Activated naive CD8-positive, alpha-beta T cell treated with anti-CD3 and anti-CD28 coated beads, Interleukin-2, amount 10 ng/mL, durations not matched to agents 7 days and 5 days (primary cell): ENCODE measurements at regions of chr15 and their contacts with region 1.

Region 1: DNA sequence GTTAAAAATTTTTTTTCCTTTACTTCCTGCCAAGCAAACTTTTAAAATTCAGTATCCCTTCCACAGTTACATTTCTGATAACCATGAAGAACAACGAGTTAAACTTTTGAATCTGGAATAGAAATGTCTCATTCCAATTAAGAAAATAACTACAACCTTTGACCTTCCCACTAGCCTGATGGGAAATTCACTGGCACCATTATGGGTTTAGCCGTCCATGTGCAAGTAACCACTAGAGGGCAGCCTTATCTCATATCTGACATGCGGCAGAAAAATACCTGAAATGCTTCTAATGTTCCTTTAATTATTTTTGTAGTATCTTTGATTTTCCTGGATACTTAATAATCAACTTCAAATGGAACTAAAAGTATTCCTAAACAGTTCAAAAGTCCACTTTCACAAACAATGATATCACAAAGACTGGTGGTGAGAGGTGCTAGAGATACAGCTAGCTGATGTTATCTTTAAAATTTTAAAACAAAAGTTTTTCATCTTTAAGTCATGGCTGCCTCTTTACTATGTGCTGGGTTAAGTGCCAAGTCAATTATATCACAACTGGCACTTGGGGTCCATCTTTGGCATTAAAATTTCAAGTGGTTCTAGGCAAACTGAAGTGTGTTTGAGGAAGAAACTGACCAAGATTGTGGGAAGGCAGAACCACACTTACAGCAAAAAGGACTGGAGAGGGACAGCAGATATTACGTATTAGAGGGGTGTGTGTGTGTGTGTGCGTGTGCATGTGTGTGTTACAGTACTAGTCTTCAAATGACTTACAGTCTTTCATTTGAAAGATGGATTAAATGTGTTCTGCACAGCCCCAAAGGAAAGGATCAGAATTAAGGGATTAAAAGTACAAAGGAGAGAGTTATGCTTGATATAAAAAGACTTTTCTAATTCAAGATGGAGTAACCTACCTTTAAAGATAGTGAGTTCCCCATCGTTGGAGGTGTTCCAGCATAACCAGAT is 107.1 kb upstream of the ICE2 start:
- DNase-seq: no peak
- ATAC-seq: no peak
- H3K4me3 Mint-ChIP-seq: peak overlapping the region; percentile 72
- H3K27ac Mint-ChIP-seq: peak overlapping the region; percentile 84
- H3K4me1 Mint-ChIP-seq: peaks cover 64% of the 10 kb centered on the region
- H3K27me3 Mint-ChIP-seq: no peaks in the 10 kb centered on the region

Region 2: DNA sequence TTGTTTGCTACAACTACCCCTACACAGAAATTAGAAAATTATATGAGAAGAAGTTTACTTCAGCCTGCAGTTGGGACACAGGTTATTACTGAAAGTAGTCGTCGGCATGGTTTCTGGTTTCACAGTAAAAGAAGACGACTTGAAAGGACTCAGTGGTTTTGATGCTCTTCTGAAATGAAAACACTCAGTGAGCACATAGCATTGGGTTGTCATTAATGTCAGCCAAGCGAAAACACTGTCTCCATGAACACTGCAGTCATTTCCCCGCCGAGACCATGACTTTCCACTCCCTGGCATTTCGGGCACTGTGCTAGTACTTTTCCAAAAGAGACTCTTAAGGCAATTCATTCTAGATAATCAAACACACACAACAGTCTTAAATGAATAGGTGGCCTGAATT is 37.9 kb before region 1 on chr15:
- POLR2A ChIA-PET with region 1: interaction called, 25 read pairs
- DNase-seq: no peak
- ATAC-seq: peak; percentile 76
- H3K4me3 Mint-ChIP-seq: peak overlapping the region; percentile 82
- H3K27ac Mint-ChIP-seq: peak overlapping the region; percentile 98
- H3K4me1 Mint-ChIP-seq: peaks cover 84% of the 10 kb centered on the region
- H3K27me3 Mint-ChIP-seq: no peaks in the 10 kb centered on the region

Region 3: GRCh38 chr15:60568301-60568742 is 17.7 kb before region 1 on chr15:
- POLR2A ChIA-PET with region 1: interaction called, 36 read pairs
- DNase-seq: no peak
- ATAC-seq: peak; percentile 17
- H3K4me3 Mint-ChIP-seq: peak overlapping the region; percentile 67
- H3K27ac Mint-ChIP-seq: peak overlapping the region; percentile 83
- H3K4me1 Mint-ChIP-seq: peaks cover 66% of the 10 kb centered on the region
- H3K27me3 Mint-ChIP-seq: no peaks in the 10 kb centered on the region

Region 4: DNA sequence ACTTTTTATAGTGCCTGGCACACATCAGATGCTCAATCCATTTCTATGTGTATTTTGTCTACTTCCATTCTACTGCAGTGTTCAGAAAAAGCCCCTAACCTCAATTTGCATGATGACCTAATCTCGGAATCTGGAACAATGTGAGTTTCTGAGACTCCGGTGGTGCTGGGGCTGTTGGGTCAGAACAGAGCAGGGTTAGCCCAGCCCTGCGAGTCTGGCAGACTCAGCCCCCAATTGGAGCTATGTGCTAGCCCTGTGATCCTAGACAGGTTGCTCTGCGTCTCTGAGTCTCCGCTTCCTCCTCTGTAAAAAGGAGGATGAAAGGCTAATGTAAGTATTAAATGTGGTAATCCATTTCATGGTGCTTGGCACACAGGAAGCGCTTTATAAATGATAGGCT is 12.1 kb before region 1 on chr15:
- POLR2A ChIA-PET with region 1: interaction called, 36 read pairs
- DNase-seq: no peak
- ATAC-seq: peak; percentile 50
- H3K4me3 Mint-ChIP-seq: peak overlapping the region; percentile 6
- H3K27ac Mint-ChIP-seq: peak overlapping the region; percentile 77
- H3K4me1 Mint-ChIP-seq: peaks cover 68% of the 10 kb centered on the region
- H3K27me3 Mint-ChIP-seq: no peaks in the 10 kb centered on the region

Region 5: GRCh38 chr15:60673918-60674558 is 88.0 kb after region 1 on chr15:
- POLR2A ChIA-PET with region 1: no interaction called
- DNase-seq: no peak
- ATAC-seq: no peak
- H3K4me3 Mint-ChIP-seq: no peak overlapping the region
- H3K27ac Mint-ChIP-seq: no peak overlapping the region
- H3K4me1 Mint-ChIP-seq: no peaks in the 10 kb centered on the region
- H3K27me3 Mint-ChIP-seq: peaks cover 5% of the 10 kb centered on the region